ENCODE measurements at regions of chr2 and their contacts with region 1.

Region 1: DNA sequence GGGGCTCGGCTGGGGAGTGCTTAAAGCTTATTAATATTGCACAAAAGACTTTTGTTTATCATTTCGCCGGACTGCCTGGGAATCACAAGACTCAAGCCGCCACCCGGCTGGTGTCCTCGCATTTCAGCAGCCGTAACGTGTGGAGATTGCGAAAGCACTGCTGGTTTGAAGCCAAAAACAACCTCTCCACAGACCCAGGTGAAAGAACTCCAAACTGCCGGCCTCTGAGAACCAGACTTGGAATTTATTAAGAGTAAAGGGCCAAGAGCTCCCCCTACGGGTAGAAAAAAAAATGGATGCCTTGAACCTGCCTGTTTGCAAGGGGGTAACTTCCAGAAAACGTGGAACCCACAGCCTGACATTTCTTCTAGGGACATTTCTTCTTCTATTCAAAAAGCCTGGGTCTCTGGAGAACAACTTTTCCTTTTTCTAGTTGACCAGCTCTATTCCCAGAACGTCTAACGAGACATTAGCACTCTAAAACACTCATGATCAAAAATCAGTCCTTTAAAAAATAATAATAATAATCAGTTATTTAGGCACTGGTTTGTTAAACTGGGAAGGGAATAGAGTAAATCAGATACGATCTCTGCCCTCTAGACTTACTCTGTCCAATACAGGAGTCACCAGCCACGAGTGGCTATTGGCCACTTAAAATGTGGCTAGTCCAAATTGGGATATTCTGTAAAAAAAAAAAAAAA is 216.3 kb downstream of the C1D start:
- DNase-seq: no peak
- ATAC-seq: peak; percentile 74
- H3K4me3 ChIP-seq: no peak overlapping the region
- H3K27ac ChIP-seq: no peak overlapping the region
- H3K4me1 ChIP-seq: no peaks in the 10 kb centered on the region
- H3K27me3 ChIP-seq: no peaks in the 10 kb centered on the region; a peak in 1 of 4 replicates
- CTCF ChIP-seq: peak; percentile 61 to 76 (median 67)
- EP300 ChIP-seq: no peak
- POLR2A ChIP-seq: no peak
- RAD21 ChIP-seq: peak; percentile 66

Region 2: GRCh38 chr2:66429071-66429477 is 1417.4 kb before region 1 on chr2:
- CTCF ChIA-PET with region 1: interaction called, 7 read pairs
- POLR2A ChIA-PET with region 1: no interaction called
- RAD21 ChIA-PET with region 1: interaction called, 3 read pairs
- SMC1A ChIA-PET with region 1: no interaction called
- in situ Hi-C with region 1: loop called (anchors 25 kb)
- intact Hi-C with region 1: loop called (anchors 5 kb)
- DNase-seq: no peak
- ATAC-seq: peak; percentile 61
- H3K4me3 ChIP-seq: no peak overlapping the region
- H3K27ac ChIP-seq: no peak overlapping the region
- H3K4me1 ChIP-seq: no peaks in the 10 kb centered on the region
- H3K27me3 ChIP-seq: peaks cover 6 to 16% of the 10 kb centered on the region in 2 experiments
- CTCF ChIP-seq: peak; percentile 60 to 87 (median 82)
- EP300 ChIP-seq: no peak
- POLR2A ChIP-seq: no peak
- RAD21 ChIP-seq: peak; percentile 88

Region 3: GRCh38 chr2:67888351-67889005 is 42.0 kb after region 1 on chr2:
- CTCF ChIA-PET with region 1: no interaction called
- POLR2A ChIA-PET with region 1: no interaction called
- RAD21 ChIA-PET with region 1: no interaction called
- SMC1A ChIA-PET with region 1: no interaction called
- in situ Hi-C with region 1: no loop called
- intact Hi-C with region 1: no loop called
- DNase-seq: no peak
- ATAC-seq: no peak
- H3K4me3 ChIP-seq: no peak overlapping the region
- H3K27ac ChIP-seq: no peak overlapping the region
- H3K4me1 ChIP-seq: no peaks in the 10 kb centered on the region
- H3K27me3 ChIP-seq: no peaks in the 10 kb centered on the region; a peak in 1 of 4 replicates
- CTCF ChIP-seq: no peak
- EP300 ChIP-seq: no peak
- POLR2A ChIP-seq: no peak
- RAD21 ChIP-seq: no peak